Activated T-helper 1 cell treated with anti-CD3 and anti-CD28 coated beads, Interleukin-12 subunit alpha, Interleukin-12 subunit beta, Interleukin-2, Interleukin-4 antibody, amounts not matched to agents 30 ng/mL and 10 ng/mL and 1 ng/mL, durations not matched to agents 14 hours and 24 hours and 36 hours (primary cell): ENCODE measurements at regions of chr17 and their contacts with region 1.

Region 1: DNA sequence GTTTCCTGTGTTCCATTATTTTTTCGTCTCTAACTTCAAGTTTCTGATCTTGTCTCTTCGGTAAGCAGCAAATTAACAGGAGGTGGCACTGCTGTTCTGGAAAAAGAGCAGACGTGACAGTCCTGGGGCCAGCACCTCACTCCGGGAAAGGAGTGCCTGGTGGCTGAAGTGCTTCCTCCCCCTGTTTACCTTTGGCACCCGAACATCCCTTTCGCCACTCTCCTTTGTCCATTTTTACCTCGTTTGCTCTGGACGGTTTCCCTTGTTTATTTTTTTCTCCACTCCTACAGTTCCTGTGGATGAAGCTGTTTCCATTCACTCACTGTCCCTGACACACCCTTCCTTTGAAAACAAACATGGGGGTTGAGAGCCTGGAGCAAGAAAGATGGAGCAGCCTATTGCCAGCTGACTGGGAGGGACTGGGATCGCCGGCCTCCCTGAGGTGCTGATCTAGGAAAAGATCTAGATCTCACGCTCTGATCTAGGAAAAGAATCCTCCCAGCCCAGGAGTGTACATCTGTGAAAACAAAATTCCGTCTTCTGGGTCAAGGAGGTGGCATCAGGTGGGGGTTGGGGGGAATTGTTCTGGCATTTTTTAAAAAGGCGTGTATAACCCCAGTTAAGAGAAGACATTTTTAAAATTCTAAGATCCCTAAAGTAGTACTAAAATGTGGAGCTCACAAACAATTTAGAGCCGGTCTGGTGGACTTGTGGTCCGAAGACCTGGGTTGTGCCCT is 12.7 kb downstream of the SAP30BP start:
- DNase-seq: no peak
- H3K4me3 Mint-ChIP-seq: no peak overlapping the region
- H3K27ac Mint-ChIP-seq: no peak overlapping the region
- H3K4me1 Mint-ChIP-seq: peaks cover 13% of the 10 kb centered on the region
- H3K27me3 Mint-ChIP-seq: no peaks in the 10 kb centered on the region

Region 2: DNA sequence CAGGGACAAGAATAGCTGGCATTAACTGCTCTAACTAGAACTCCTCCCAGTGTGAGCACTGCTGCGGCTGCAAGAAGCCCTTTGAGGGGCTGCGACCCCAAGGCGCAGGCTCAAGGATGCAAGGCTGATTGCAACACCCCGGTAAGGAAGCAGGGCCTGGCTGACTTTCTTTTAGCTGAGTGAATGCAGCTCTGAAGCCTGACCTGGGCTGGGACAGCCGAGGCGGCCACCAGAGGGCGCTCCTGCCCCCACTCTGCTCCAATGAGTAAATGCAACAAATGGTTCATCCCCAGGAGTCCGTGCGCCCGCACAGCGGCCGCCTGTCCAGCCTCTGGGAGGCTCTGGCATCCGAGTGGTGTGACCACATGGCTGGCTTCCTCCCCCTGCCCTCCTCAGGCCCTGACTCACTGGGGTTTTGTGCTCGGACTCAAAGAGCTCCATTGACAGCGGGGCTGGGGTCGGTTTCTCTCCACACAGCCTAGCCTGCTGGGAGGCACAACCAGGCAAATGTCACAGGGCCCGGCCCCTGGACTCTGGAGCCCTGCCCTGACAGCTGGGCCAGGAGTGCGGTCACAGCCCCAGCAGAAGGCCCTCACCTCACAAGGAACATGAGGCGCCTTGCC is 46.9 kb before region 1 on chr17 and contains the start of gene SMIM5:
- intact Hi-C with region 1: loop called (anchors 1 kb)
- DNase-seq: peak; percentile 77
- H3K4me3 Mint-ChIP-seq: no peak within 1 kb of the TSS
- H3K27ac Mint-ChIP-seq: no peak within 1 kb of the TSS
- H3K4me1 Mint-ChIP-seq: no peaks in the 10 kb centered on the region
- H3K27me3 Mint-ChIP-seq: no peaks in the 10 kb centered on the region
- total RNA-seq, gene SMIM5: 0.05 TPM in 1 of 2 replicates, not detected in the other

Region 3: DNA sequence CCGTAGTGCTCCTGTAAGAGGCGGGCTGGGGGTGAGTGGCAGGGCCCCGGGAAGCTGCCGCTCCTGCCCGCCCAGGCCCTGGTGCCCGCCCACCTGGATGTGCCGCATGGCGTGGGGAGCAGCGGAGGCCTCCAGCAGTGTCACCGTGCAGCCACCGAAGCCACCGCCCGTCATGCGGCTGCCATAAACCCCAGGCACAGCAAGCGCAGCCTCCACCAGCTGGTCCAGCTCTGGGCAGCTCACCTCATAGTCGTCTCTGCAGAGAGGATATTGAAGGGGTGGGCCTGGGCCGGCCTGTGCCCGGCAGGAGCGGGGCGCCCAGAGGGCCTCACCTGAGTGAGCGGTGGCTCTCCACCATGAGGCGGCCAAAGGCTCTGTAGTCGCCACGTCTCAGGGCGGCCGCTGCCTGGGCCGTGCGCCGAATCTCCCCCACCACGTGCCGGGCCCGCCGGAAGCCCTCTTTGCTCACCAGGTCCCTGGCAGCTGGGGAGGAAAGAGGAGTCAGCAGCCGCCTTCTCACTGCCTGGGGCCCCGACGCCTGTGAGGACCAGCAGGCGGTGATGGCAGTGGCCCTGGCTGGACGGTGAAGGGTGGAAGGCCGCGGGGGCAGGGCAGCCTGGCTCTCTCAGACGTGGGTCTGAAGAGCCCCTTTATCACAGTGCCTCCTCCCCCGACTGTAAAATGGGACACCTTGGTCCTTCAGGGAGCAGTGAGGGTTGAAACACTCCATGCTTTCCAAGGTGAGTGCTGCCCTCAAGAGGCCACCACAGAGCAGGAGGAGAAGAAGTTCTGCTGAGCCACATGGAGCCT is 78.4 kb after region 1 on chr17:
- intact Hi-C with region 1: no loop called
- DNase-seq: no peak
- H3K4me3 Mint-ChIP-seq: no peak overlapping the region
- H3K27ac Mint-ChIP-seq: no peak overlapping the region
- H3K4me1 Mint-ChIP-seq: peaks cover 12% of the 10 kb centered on the region
- H3K27me3 Mint-ChIP-seq: no peaks in the 10 kb centered on the region